Activated T-helper 1 cell treated with anti-CD3 and anti-CD28 coated beads, Interleukin-12 subunit alpha, Interleukin-12 subunit beta, Interleukin-2, Interleukin-4 antibody, amounts not matched to agents 30 ng/mL and 10 ng/mL and 1 ng/mL, durations not matched to agents 14 hours and 24 hours and 36 hours (primary cell): ENCODE measurements at regions of chr4 and their contacts with region 1.

Region 1: DNA sequence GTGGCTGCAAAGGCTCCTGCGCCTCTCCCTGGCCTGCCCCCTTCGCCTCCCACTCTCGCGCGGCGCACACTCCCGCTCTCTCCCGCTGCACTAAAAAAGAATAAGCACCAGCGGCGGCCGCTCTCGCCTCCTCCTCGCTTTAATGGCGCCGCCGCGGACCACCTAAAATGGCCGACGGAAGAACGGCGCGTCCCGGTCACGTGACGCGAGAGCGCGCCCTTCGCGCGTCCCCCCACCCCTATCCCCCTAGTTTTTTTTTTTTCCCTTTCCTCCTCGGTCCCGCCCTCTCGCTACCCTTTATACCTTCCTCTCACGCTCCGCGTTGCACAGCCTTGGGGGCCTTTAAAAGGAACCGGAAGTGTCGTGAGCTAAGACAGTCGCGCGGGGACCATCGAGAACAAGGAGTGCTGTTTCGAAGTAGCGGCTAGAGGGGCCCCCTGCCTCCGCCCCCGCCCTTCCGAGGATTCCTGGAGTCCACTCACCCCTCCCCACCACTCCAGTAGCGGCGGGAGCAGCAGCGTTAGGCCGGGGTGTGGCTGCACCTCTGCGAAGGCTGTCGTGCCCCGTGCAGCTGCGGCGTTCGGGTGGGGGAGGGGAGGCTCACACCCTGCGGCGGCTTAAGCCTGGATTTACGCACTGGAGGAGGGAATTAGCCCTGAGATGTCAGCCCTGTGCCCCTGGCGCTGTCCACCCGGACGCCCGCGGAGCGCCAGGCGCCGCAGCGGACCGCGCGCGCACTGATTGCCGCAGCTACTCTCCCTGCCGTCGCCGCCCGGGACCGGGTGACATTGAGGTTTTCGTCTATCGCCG is at the start of gene HNRNPD:
- DNase-seq: peak; percentile 92
- H3K4me3 Mint-ChIP-seq: peak within 1 kb of the TSS; percentile 99
- H3K27ac Mint-ChIP-seq: peak within 1 kb of the TSS; percentile 100
- H3K4me1 Mint-ChIP-seq: peaks cover 37% of the 10 kb centered on the region
- H3K27me3 Mint-ChIP-seq: peaks cover 2% of the 10 kb centered on the region
- total RNA-seq, gene HNRNPD: 434 and 438 TPM in 2 replicates

Region 2: GRCh38 chr4:82284858-82285805 is 88.9 kb before region 1 on chr4:
- intact Hi-C with region 1: loop called (anchors 1 kb)
- DNase-seq: peak; percentile 99
- H3K4me3 Mint-ChIP-seq: peak overlapping the region; percentile 80
- H3K27ac Mint-ChIP-seq: peak overlapping the region; percentile 27
- H3K4me1 Mint-ChIP-seq: peaks cover 14% of the 10 kb centered on the region
- H3K27me3 Mint-ChIP-seq: peaks cover 24% of the 10 kb centered on the region

Region 3: DNA sequence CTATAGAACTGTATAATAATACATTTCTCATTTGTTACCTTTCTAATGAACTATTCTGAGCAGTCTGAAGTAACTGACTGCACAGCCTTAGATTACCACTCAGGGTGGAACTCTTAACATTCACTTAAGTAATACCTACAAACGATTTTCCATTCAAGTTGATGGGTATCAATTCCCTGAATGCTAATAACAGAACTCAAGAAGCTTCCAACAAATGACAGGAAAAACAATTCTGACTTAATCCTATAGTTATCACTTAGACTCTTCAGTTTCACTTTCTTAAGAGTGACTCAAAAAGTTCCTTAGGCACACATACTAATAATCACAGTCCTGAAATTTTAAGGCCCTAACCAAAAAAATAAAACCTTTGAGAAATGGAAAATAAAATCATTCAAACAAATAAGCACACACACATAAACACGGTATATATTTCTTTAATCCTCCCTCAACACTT is 21.1 kb before region 1 on chr4:
- intact Hi-C with region 1: loop called (anchors 1 kb)
- DNase-seq: no peak
- H3K4me3 Mint-ChIP-seq: no peak overlapping the region
- H3K27ac Mint-ChIP-seq: peak overlapping the region; percentile 77
- H3K4me1 Mint-ChIP-seq: peaks cover 42% of the 10 kb centered on the region
- H3K27me3 Mint-ChIP-seq: no peaks in the 10 kb centered on the region

Region 4: GRCh38 chr4:82360298-82361177 is 13.5 kb before region 1 on chr4:
- intact Hi-C with region 1: loop called (anchors 1 kb)
- DNase-seq: no peak
- H3K4me3 Mint-ChIP-seq: no peak overlapping the region
- H3K27ac Mint-ChIP-seq: peak overlapping the region; percentile 57
- H3K4me1 Mint-ChIP-seq: peaks cover 83% of the 10 kb centered on the region
- H3K27me3 Mint-ChIP-seq: no peaks in the 10 kb centered on the region

Region 5: DNA sequence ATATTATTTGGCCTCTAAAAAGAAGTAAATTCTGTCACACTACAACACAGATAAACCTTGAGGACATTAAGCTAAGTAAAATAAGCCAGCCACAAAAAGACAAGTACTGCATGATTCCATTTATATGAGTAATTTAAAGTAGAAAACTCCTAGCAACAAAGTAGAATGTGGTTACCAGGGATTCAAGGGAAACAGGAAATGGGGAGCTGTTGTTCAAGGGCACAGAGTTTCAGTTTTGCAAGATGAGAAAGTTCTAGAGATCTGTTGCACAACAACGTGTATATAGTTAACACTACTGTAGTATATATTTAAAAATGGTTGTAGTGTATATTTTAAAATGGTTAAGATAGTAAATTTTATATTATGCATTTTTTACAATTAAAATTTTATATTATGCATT is 491.6 kb after region 1 on chr4:
- intact Hi-C with region 1: loop called (anchors 1 kb)
- DNase-seq: peak; percentile 24
- H3K4me3 Mint-ChIP-seq: no peak overlapping the region
- H3K27ac Mint-ChIP-seq: peak overlapping the region; percentile 91
- H3K4me1 Mint-ChIP-seq: peaks cover 48% of the 10 kb centered on the region
- H3K27me3 Mint-ChIP-seq: no peaks in the 10 kb centered on the region